HEK293 (cell line): ENCODE measurements at regions of chr14 and their contacts with region 1.

Region 1: GRCh38 chr14:90903101-90903500 is 86.9 kb upstream of the TTC7B start:
- H3K4me3 ChIP-seq: no peak overlapping the region
- H3K27ac ChIP-seq: no peak overlapping the region
- H3K4me1 ChIP-seq: no peaks in the 10 kb centered on the region
- CTCF ChIP-seq: peak; percentile 58; the same call in 1 of the 2 replicates

Region 2: GRCh38 chr14:91138511-91139359 is 235.6 kb after region 1 on chr14:
- CTCF ChIA-PET with region 1: interaction called, 44 read pairs
- POLR2A ChIA-PET with region 1: no interaction called
- H3K4me3 ChIP-seq: no peak overlapping the region
- H3K27ac ChIP-seq: no peak overlapping the region
- H3K4me1 ChIP-seq: no peaks in the 10 kb centered on the region
- CTCF ChIP-seq: 0 out of 2 replicates have a peak, but pooled peaks have one; percentile 47